ENCODE measurements at regions of chr13 and their contacts with region 1.

Region 1: DNA sequence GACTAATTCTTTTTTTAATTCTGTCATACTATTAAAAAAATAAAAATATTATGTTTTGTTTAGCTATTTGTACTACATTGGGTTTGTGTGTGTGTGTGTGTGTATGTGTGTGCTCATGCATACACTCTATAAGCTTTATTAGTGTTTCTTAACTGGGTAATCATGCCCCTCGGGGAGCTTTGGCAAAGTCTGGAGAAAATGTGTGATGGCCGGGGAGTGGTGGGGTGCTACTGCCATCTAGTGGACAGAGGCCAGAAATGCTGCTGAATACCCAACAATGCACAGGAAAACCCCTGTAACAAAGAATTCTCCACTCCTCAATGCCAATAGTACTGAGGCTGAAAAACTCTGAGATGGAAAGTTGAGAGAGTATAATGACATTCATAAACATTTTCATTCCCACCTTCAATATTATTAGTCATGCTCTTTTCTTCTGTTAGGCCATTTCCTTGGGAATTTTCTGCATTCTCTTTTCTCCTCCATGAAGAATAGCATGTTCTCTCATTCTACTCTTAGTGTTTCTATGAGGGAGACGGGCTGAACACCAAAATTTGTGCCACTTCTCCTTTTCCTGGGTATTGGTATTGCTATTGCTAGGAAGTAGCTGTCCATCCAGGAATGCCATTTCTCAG is 157.3 kb downstream of the DNAJC3 start:
- DNase-seq: peak; percentile 51 to 52
- H3K4me3 ChIP-seq: no peak overlapping the region
- H3K27ac ChIP-seq: 0 out of 2 replicates have a peak overlapping the region, but pooled peaks have one; percentile 8
- H3K4me1 ChIP-seq: peaks cover 16% of the 10 kb centered on the region
- H3K27me3 ChIP-seq: no peaks in the 10 kb centered on the region
- CTCF ChIP-seq: peak; percentile 97

Region 2: DNA sequence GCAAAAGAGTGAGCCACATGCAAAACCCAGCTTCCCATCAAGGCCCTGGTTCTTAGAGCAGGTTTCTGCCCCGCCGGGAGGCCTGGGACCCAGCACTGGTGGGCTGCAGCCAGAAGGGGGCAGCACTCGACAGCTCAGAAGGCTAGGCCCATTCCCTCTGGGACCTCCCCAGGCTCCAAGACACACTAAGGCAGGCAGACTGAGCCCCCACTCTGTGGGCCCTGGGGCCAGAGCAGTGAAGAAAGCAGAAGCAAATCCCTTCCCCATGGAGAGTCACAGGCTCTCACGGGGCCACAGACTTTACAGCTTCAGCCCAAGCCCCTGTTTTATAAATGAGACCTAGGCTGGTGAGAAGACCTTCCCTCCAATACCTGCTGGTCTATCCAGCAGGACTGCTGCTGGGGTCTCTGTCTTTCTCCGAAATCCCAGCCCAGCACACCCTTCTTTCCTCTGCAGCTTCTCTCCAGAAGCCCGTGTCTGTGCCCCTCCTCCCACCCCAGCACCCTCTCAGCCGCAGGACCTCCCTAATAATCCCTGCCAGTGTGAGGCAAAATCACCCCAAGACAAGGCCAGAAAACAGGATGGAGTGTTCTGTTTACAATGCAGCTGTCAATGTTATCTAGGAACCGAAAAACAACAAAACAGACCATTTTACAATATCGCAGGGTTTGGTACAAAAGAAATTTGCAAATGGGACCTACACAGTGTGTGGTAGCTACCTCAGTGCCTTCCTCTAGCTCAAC is 642.3 kb before region 1 on chr13:
- CTCF ChIA-PET with region 1: interaction called, 5 read pairs
- POLR2A ChIA-PET with region 1: no interaction called
- intact Hi-C with region 1: loop called (anchors 1 kb)
- DNase-seq: peak; percentile 67 to 78
- H3K4me3 ChIP-seq: no peak overlapping the region
- H3K27ac ChIP-seq: no peak overlapping the region
- H3K4me1 ChIP-seq: no peaks in the 10 kb centered on the region
- H3K27me3 ChIP-seq: no peaks in the 10 kb centered on the region
- CTCF ChIP-seq: peak; percentile 96

Region 3: GRCh38 chr13:95387733-95388207 is 446.5 kb before region 1 on chr13:
- CTCF ChIA-PET with region 1: interaction called, 13 read pairs
- POLR2A ChIA-PET with region 1: no interaction called
- intact Hi-C with region 1: no loop called
- DNase-seq: no peak
- H3K4me3 ChIP-seq: no peak overlapping the region
- H3K27ac ChIP-seq: no peak overlapping the region
- H3K4me1 ChIP-seq: no peaks in the 10 kb centered on the region
- H3K27me3 ChIP-seq: peaks cover 7% of the 10 kb centered on the region; the same call in 1 of the 2 replicates
- CTCF ChIP-seq: no peak

Region 4: DNA sequence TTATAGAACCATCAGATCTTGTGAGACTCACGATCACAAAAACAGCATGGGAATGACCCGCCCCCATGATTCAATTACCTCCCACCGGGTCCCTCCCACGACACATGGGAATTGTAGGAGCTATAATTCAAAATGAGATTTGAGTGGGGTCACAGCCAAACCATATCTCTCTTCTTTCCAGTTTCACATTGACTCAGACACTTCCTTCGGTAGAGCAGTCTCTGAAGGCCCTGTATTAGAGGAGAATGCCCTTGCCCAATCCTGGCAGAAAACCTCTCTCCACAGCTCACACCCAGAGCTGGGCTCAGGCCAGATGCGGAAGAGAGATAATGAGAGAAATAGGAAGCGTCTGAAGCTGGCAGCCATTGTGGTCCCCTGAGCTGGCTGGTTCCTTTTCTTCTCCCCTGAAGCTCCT is 354.1 kb before region 1 on chr13:
- CTCF ChIA-PET with region 1: no interaction called
- POLR2A ChIA-PET with region 1: no interaction called
- intact Hi-C with region 1: loop called (anchors 5 kb)
- DNase-seq: no peak
- H3K4me3 ChIP-seq: no peak overlapping the region
- H3K27ac ChIP-seq: no peak overlapping the region
- H3K4me1 ChIP-seq: peaks cover 1% of the 10 kb centered on the region; the same call in 1 of the 2 replicates
- H3K27me3 ChIP-seq: 0 out of 2 replicates have a peak, but pooled peaks cover 4% of the 10 kb centered on the region
- CTCF ChIP-seq: no peak

Region 5: DNA sequence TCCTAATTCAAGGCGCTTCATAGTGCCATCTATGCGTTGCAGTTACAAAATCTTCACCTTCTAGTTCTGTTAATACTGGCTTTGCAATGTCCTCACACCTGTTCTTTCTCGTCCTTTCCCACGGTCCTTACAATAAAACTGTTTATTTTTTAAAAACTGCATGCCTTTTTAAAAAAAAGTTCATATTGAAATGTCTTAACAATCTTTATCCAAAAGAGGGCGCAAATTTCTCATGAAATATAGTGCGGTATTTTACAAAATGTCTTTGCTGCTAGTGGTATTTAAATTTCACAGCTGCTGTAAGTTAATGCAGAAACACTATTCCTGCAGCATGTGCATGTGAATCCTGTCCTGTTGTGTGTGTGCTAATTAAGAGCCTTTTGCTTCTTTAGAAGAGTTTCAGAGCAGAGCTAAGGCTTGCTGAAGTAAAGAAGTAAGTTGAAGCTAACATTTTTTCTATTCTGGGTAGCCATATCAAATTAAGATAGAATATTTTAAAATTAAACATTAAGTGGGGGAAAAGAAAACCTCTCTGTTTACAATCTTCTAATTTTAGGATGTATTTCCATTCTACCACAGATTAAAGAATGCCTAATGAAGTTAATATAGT is 297.5 kb before region 1 on chr13:
- CTCF ChIA-PET with region 1: no interaction called
- POLR2A ChIA-PET with region 1: no interaction called
- intact Hi-C with region 1: loop called (anchors 2 kb)
- DNase-seq: peak in 1 of 2 experiments; percentile 46
- H3K4me3 ChIP-seq: no peak overlapping the region
- H3K27ac ChIP-seq: no peak overlapping the region
- H3K4me1 ChIP-seq: peaks cover 49% of the 10 kb centered on the region
- H3K27me3 ChIP-seq: no peaks in the 10 kb centered on the region
- CTCF ChIP-seq: peak; percentile 62

Measured in PC-9 (cell line).